ENCODE measurements at regions of chr9 and their contacts with region 1.

Region 1: DNA sequence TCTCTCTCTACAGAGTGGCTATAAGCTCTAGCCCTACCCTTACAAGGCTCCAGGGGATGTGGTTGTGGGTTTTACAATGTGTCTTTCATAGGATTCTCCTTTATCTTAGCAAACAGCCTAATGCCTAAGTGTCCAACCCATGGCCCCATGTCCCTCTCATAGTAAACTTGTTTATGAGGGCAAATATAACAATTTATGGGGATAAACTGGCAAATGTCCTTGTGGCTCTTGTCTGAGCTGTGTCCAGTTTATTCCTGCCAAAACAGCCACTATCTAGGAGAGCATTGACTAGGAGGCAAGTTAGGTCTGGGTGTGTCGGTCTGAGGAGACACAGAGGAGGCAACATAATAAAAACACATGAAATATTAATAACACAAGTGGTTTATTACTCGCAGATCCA is 335.1 kb downstream of the IZUMO3 start:
- ATAC-seq: no peak
- H3K4me3 ChIP-seq: no peak overlapping the region
- H3K27ac ChIP-seq: no peak overlapping the region
- H3K4me1 ChIP-seq: no peaks in the 10 kb centered on the region

Region 2: GRCh38 chr9:24051587-24051986 is 159.1 kb before region 1 on chr9:
- in situ Hi-C with region 1: no loop called
- ATAC-seq: no peak
- H3K4me3 ChIP-seq: no peak overlapping the region
- H3K27ac ChIP-seq: no peak overlapping the region
- H3K4me1 ChIP-seq: no peaks in the 10 kb centered on the region

Region 3: DNA sequence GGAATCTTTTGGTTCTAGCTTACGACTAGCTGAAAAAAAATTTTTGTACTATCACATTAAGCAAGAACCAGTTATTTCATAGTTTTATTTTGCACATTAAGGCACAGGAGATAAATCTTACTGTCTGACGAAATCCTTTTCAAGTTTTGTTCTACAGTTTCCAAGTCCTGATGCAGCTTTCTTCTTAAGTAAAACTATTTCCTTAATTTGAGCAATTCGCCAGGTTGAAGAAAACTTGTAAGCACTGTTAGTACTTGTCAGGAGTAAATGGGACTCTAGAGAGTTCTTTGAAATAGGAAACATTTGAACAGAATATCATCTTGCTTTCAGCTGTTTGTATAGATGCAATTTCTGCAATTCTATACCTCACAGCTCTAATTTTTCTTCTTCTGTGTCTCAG is 65.8 kb before region 1 on chr9:
- in situ Hi-C with region 1: loop called in 1 of 9 experiments (anchors 10 kb)
- ATAC-seq: no peak
- H3K4me3 ChIP-seq: no peak overlapping the region
- H3K27ac ChIP-seq: no peak overlapping the region
- H3K4me1 ChIP-seq: peaks cover 0 to 7% of the 10 kb centered on the region in 2 donors